Sigmoid colon (tissue), 7 donors: ENCODE measurements at regions of chr15 and their contacts with region 1.

Region 1: GRCh38 chr15:70892002-70892914 is at the starts of genes LRRC49 and THAP10:
- DNase-seq: peak; percentile 95
- H3K4me3 ChIP-seq: peak within 1 kb of the TSS; percentile 60 to 83 (median 78)
- H3K27ac ChIP-seq: peak within 1 kb of the TSS; percentile 76 to 83 (median 80)
- H3K4me1 ChIP-seq: peaks cover 0 to 22% (median 16%) of the 10 kb centered on the region in 4 donors
- H3K27me3 ChIP-seq: no peaks in the 10 kb centered on the region
- CTCF ChIP-seq: no peak
- EP300 ChIP-seq: no peak
- POLR2A ChIP-seq: no peak
- total RNA-seq, gene LRRC49: 10.3 to 20.2 (median 12.6) TPM
- total RNA-seq, gene THAP10: 1.1 to 3.6 (median 2.7) TPM

Region 2: DNA sequence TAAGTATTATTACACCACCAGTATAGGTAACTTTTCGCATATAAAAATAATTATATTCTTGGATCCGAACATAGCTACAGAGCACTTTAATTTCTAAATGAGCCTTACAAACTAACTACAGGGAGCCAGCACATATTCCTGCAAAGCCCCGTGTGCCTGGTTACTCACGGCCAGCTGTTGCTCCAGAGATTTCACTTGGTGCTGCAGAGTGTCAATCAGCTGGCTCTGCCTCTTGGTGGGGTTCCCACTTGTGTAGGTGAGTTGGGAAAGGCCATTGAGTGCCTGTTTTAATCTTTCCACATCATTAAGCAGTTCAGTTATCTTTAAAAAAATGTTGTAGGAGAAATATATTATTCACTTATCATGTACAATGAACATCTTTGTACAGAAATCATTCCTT is 227.8 kb before region 1 on chr15:
- intact Hi-C with region 1: no loop called
- DNase-seq: no peak
- H3K4me3 ChIP-seq: no peak overlapping the region
- H3K27ac ChIP-seq: no peak overlapping the region
- H3K4me1 ChIP-seq: no peaks in the 10 kb centered on the region
- H3K27me3 ChIP-seq: no peaks in the 10 kb centered on the region
- CTCF ChIP-seq: no peak
- EP300 ChIP-seq: no peak
- POLR2A ChIP-seq: no peak

Region 3: DNA sequence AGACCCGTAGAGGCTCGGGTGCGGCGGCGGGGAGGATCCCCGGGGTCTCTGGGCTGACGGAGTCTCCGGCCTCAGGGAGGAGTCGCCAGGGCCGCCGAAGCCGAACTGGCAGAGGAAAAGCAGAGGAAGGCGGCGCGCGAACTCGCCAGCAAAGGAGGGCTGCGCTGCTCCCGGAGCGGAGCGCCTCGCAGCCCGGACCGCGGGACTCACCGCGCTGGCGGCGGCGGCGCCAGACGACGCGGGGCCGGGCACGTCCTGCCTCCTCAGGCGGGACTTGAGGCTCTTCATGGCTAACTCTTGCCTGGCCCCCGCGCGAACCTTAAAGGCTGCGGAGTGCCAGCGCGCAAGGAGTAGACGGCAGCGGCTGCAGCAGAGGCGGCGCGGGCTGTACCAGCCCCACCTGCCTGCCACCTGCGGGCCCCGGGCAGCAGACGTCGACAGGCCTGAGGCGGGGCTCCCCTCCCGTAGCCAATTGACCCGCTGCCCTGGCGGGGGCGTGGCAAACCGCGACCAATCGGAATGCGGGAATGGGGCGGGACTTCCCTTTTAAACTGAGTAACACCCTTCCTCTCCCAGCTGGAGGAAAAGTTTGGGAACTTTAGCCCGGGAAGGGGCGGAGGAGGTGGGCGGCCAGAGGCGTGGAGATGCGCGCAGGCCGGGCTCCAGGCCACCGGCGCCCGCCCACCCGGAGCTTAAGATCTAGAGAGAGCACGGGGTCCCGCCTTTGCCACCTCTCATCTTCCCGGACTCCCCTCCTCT is 129.0 kb before region 1 on chr15 and contains the start of gene UACA:
- intact Hi-C with region 1: loop called (anchors 5 kb)
- DNase-seq: peak; percentile 98
- H3K4me3 ChIP-seq: peak within 1 kb of the TSS; percentile 65 to 95 (median 82)
- H3K27ac ChIP-seq: peak within 1 kb of the TSS; percentile 89 to 95 (median 92)
- H3K4me1 ChIP-seq: peaks cover 0 to 18% (median 9%) of the 10 kb centered on the region in 4 donors
- H3K27me3 ChIP-seq: no peaks in the 10 kb centered on the region
- CTCF ChIP-seq: no peak
- EP300 ChIP-seq: no peak
- POLR2A ChIP-seq: peak; percentile 72 to 82
- total RNA-seq, gene UACA: 19.1 to 51.0 (median 29.4) TPM

Region 4: GRCh38 chr15:70815644-70816043 is 76.6 kb before region 1 on chr15:
- intact Hi-C with region 1: no loop called
- DNase-seq: no peak
- H3K4me3 ChIP-seq: no peak overlapping the region
- H3K27ac ChIP-seq: no peak overlapping the region
- H3K4me1 ChIP-seq: no peaks in the 10 kb centered on the region
- H3K27me3 ChIP-seq: no peaks in the 10 kb centered on the region
- CTCF ChIP-seq: no peak
- EP300 ChIP-seq: no peak
- POLR2A ChIP-seq: no peak

Region 5: DNA sequence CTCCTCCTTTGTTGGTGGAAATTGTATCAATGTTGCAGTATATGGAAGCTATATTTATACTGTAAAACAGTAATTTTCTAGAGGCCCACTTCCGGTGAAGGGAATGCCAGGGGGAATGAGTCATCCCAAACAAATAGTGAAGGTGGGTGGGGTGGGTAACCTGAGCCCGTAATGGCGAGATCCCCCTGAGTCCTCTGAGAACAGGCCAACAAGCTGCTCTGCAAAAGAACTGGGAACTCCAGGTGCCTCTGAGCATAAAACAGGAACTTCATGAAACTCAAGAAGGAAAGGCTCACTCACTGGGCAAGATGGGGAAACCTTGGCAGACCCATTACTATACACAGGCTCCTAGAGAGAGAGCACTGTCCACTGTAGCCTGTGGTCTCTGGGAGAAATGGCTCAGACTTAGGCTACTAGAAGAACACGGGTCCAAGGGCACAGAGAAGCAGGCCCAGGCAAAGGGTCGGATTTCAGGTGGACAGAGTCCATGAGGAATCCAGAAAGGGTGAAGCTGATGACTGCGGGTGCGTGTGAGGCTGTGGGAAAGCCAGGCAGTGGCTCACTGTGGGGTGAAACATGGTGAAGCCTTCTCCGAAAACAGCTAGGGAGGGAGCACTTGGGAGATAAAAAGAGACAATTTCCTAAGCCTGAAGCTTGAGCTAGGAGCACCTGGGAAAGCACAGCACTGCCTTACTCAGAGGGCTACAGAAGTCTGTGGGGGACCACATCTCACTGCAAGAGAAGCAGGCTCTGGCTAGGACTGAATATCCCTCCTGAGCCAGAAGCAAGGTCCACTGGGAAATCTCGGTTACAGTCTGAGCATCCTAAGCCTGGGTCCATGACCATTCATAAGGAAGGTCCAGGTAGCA is 58.1 kb before region 1 on chr15:
- intact Hi-C with region 1: no loop called
- DNase-seq: no peak
- H3K4me3 ChIP-seq: no peak overlapping the region
- H3K27ac ChIP-seq: peak overlapping the region in 1 of 4 donors; percentile 14
- H3K4me1 ChIP-seq: peaks cover 0 to 9% (median 0%) of the 10 kb centered on the region in 4 donors
- H3K27me3 ChIP-seq: no peaks in the 10 kb centered on the region
- CTCF ChIP-seq: no peak
- EP300 ChIP-seq: no peak
- POLR2A ChIP-seq: no peak

Region 6: DNA sequence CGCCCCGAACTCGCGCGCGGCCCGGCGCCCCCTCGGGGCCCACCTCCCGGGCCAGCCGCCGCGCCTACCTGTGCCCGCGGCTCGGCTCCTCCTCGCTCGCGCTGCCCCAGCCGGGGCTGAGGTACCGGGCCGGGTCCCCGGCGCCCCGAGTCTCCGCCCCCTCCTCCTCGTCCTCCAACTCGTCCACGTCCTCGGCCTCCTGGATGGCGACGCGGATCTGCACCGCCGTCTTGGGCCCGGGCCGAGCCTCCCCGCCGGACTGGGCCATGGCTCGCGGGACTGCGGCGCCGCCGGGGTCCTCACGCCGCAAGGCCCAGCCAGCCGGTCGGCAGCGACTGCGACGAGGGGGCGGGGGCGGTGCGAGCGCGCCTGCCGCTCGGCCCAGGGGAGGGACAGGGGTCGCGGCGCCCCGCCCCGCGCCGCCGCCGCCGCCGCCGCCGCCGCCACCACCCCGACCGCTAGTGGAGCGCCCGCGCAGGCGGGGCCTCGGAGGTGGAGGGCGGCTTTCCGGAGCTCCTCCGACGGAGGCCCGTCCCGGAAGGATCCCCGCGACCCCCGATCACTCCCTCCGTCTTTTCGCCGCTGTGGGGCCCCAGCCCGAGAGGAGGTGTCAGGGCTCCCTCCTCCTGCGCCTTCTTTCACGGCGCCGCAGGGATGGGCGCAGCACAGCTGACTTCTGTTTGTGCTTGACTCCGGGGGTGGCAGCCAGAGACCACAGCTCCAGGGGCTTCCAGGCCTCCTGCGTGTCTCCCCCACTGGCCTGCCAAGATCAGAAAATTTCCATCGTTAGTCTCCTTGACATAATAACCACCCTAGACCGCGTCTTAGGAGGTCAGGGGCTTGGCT is 38.2 kb before region 1 on chr15 and contains the start of gene LARP6:
- intact Hi-C with region 1: loop called (anchors 5 kb)
- DNase-seq: peak; percentile 73
- H3K4me3 ChIP-seq: peak within 1 kb of the TSS; percentile 68 to 87 (median 80)
- H3K27ac ChIP-seq: peak within 1 kb of the TSS; percentile 79 to 90 (median 88)
- H3K4me1 ChIP-seq: peaks cover 0 to 34% (median 23%) of the 10 kb centered on the region in 4 donors
- H3K27me3 ChIP-seq: no peaks in the 10 kb centered on the region
- CTCF ChIP-seq: no peak
- EP300 ChIP-seq: no peak
- POLR2A ChIP-seq: peak in 1 of 2 donors; percentile 28
- total RNA-seq, gene LARP6: 13.7 to 26.6 (median 24.3) TPM

Region 7: GRCh38 chr15:71443538-71443937 is 551.3 kb after region 1 on chr15:
- intact Hi-C with region 1: loop called (anchors 5 kb)
- DNase-seq: no peak
- H3K4me3 ChIP-seq: no peak overlapping the region
- H3K27ac ChIP-seq: no peak overlapping the region
- H3K4me1 ChIP-seq: no peaks in the 10 kb centered on the region
- H3K27me3 ChIP-seq: no peaks in the 10 kb centered on the region
- CTCF ChIP-seq: peak; percentile 35 to 90 (median 82)
- EP300 ChIP-seq: no peak
- POLR2A ChIP-seq: no peak